Activated CD4-positive, alpha-beta T cell treated with anti-CD3 and anti-CD28 coated beads for 36 hours (primary cell): ENCODE measurements at regions of chr17 and their contacts with region 1.

Region 1: GRCh38 chr17:64496786-64497564 is at the start of gene POLG2:
- DNase-seq: peak; percentile 97
- ATAC-seq: peak; percentile 86
- H3K4me3 Mint-ChIP-seq: peak within 1 kb of the TSS; percentile 98
- H3K27ac Mint-ChIP-seq: peak within 1 kb of the TSS; percentile 98
- H3K4me1 Mint-ChIP-seq: peaks cover 68% of the 10 kb centered on the region
- H3K27me3 Mint-ChIP-seq: no peaks in the 10 kb centered on the region
- total RNA-seq, gene POLG2: 26.9 to 30.2 TPM

Region 2: GRCh38 chr17:64020056-64020766 is 476.8 kb before region 1 on chr17 and contains the start of gene ICAM2:
- CTCF ChIA-PET with region 1: no interaction called
- POLR2A ChIA-PET with region 1: interaction called, 10 read pairs
- intact Hi-C with region 1: loop called in 1 of 2 experiments (anchors 2 kb)
- DNase-seq: peak; percentile 92
- ATAC-seq: peak; percentile 73
- H3K4me3 Mint-ChIP-seq: peak within 1 kb of the TSS; percentile 84
- H3K27ac Mint-ChIP-seq: peak within 1 kb of the TSS; percentile 97
- H3K4me1 Mint-ChIP-seq: peaks cover 68% of the 10 kb centered on the region
- H3K27me3 Mint-ChIP-seq: no peaks in the 10 kb centered on the region
- total RNA-seq, gene ICAM2: 46.6 to 49.0 TPM

Region 3: DNA sequence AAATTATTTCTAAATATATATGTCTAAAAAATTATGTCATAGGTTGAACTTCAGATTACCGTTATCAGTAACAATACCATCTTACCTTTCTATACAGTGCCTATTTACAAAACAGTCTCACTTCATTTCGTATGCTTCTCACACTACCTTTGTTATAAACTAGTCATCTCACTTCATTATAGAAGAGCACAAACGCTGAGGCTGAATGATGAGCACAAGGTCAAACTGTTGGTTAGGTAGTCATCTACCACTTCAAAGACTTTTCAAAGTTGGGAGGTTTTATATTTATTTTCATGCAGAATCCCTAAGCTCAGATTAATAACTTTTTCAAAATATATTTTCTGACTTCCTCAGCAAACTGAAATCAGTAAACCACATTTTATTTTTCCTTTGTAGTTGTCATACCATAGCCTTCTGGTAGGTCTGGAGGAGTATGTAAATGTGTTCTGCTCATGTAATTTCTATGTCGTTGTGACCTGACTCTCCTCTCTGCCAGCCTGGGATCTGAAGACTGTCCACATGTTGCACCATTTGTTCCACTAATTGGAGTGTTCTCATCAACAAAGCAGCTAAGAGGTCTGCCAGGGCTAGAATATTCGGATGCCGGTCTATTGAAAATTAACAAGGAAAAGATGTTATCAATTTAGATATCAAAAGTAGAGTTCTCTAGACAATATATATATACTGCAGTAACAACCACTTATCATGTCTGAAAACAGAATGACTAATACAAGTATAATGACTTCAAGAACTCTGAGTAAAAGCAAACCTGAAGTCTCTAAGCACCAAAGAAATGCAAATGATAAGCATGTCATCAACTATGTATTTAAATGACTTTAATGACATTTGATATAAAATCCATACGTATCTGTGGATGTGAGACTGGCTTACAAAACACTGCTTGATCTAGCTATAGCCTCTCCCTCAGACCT is 83.7 kb after region 1 on chr17:
- CTCF ChIA-PET with region 1: interaction called, 4 read pairs
- POLR2A ChIA-PET with region 1: interaction called, 3 read pairs
- intact Hi-C with region 1: loop called in 1 of 2 experiments (anchors 2 kb)
- DNase-seq: peak; percentile 30
- ATAC-seq: peak; percentile 92
- H3K4me3 Mint-ChIP-seq: peak overlapping the region; percentile 15
- H3K27ac Mint-ChIP-seq: peak overlapping the region; percentile 85
- H3K4me1 Mint-ChIP-seq: peaks cover 26% of the 10 kb centered on the region
- H3K27me3 Mint-ChIP-seq: no peaks in the 10 kb centered on the region

Region 4: GRCh38 chr17:64608540-64608981 is 111.6 kb after region 1 on chr17:
- CTCF ChIA-PET with region 1: no interaction called
- POLR2A ChIA-PET with region 1: no interaction called
- intact Hi-C with region 1: loop called in 1 of 2 experiments (anchors 10 kb)
- DNase-seq: no peak
- ATAC-seq: peak; percentile 92
- H3K4me3 Mint-ChIP-seq: peak overlapping the region; percentile 32
- H3K27ac Mint-ChIP-seq: peak overlapping the region; percentile 95
- H3K4me1 Mint-ChIP-seq: peaks cover 43% of the 10 kb centered on the region
- H3K27me3 Mint-ChIP-seq: no peaks in the 10 kb centered on the region

Region 5: DNA sequence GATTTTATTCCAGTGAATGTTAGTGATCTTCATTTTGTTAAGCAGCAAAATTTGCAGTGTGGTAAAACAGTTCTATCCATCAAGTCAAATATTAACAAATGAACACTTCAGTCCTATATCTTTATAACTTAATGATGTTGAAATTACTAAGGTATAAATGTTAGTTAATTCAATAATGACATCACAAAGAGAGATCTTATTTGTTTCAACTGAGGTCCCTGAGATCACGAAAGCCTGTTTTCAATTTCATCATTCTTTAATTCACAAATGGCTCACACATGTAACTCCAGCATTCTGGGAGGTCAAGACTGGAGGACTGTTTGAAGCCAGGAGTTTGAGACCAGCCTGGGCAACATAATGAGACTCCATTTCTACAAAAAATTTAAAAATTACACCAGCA is 151.3 kb after region 1 on chr17:
- CTCF ChIA-PET with region 1: interaction called, 13 read pairs
- POLR2A ChIA-PET with region 1: interaction called, 4 read pairs
- intact Hi-C with region 1: loop called (anchors 1 to 2 kb)
- DNase-seq: no peak
- ATAC-seq: no peak
- H3K4me3 Mint-ChIP-seq: no peak overlapping the region
- H3K27ac Mint-ChIP-seq: peak overlapping the region; percentile 89
- H3K4me1 Mint-ChIP-seq: peaks cover 37% of the 10 kb centered on the region
- H3K27me3 Mint-ChIP-seq: no peaks in the 10 kb centered on the region

Region 6: DNA sequence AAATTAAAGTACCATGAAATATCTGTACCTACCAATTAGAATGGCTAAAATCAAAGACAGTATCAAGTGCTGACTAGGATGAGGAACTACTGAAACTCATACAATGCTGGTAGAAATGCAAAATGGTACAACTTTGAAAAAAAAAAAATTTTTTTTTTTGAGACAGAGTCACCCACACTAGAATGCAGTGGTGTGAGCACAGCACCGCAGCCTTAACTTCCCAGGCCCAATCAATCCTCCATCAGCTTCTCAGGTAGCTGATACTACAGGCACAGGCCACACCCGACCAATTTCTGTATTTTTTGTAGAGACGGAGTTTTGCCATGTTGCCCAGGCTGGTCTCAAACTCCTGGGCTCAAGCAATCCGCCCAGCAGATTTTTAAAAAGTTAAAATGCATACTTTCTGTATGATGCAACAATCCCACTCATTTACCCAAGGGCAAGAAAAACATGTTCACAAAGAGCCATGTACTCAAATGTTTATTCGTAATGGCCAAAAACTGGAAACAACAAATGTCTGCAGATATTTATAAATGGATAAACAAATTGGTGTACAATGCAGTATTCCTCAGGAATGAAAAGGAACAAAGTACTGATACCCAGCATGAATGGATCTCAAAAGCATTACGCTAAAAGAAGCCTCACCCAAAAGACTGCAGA is 156.5 kb after region 1 on chr17:
- CTCF ChIA-PET with region 1: interaction called, 13 read pairs
- POLR2A ChIA-PET with region 1: interaction called, 4 read pairs
- intact Hi-C with region 1: loop called (anchors 1 to 2 kb)
- DNase-seq: no peak
- ATAC-seq: no peak
- H3K4me3 Mint-ChIP-seq: no peak overlapping the region
- H3K27ac Mint-ChIP-seq: peak overlapping the region; percentile 43
- H3K4me1 Mint-ChIP-seq: peaks cover 42% of the 10 kb centered on the region
- H3K27me3 Mint-ChIP-seq: no peaks in the 10 kb centered on the region

Region 7: GRCh38 chr17:64661976-64662773 is 165.2 kb after region 1 on chr17 and contains the start of gene SMURF2:
- CTCF ChIA-PET with region 1: interaction called, 5 read pairs
- POLR2A ChIA-PET with region 1: no interaction called
- intact Hi-C with region 1: loop called in 1 of 2 experiments (anchors 1 kb)
- DNase-seq: peak; percentile 89
- ATAC-seq: peak; percentile 82
- H3K4me3 Mint-ChIP-seq: peak within 1 kb of the TSS; percentile 98
- H3K27ac Mint-ChIP-seq: peak within 1 kb of the TSS; percentile 92
- H3K4me1 Mint-ChIP-seq: peaks cover 27% of the 10 kb centered on the region
- H3K27me3 Mint-ChIP-seq: no peaks in the 10 kb centered on the region
- total RNA-seq, gene SMURF2: 13.9 to 15.0 TPM